Activated naive CD4-positive, alpha-beta T cell treated with anti-CD3 and anti-CD28 coated beads for 36 hours (primary cell): ENCODE measurements at regions of chr18 and their contacts with region 1.

Region 1: DNA sequence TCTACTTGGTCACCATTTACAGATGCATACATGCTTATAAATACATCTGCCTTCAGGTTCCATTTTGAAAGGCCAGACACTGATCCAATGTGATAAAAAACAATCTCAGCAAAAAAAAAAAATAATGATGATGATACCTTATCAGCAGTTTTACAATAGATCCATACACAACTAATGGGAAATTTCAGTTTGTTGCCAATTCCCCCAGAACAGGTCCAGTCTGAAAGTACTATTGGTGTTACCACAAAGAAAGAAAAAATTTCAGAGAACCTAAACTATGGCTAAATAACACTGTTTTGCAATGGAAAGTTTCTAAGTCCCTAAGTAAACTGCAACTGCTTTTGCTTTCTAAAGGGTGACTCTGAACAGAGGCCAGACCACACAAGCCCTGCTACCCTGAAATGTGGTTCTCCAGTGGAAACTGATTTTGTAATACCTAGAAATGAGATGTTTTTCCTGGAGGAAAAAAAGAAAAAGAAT is 54.1 kb downstream of the LPIN2 start:
- DNase-seq: peak; percentile 44
- H3K4me3 Mint-ChIP-seq: peak overlapping the region; percentile 53
- H3K27ac Mint-ChIP-seq: peak overlapping the region; percentile 100
- H3K4me1 Mint-ChIP-seq: peaks cover 88% of the 10 kb centered on the region
- H3K27me3 Mint-ChIP-seq: no peaks in the 10 kb centered on the region

Region 2: DNA sequence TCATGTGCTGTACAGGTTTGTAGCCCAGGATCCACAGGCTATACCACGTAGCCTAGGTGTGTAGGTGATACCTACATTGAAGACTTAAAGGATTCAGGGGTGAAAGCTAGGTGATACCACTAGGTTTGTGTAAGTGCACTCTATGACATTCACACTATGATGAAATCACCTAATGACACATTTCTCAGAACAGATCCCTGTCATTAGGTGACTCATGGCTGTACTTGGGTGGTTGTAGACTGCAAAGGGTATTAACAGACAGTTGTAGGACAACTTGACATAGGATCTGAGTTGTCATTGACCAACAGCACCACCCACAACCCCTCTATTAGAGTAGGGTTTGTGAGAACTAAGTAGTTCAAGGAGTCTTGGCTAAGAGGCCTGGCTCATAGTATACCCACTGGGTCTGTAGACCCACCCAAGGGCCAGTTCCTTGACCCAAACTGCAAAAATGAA is 331.0 kb before region 1 on chr18:
- CTCF ChIA-PET with region 1: no interaction called
- intact Hi-C with region 1: loop called (anchors 1 kb)
- DNase-seq: peak; percentile 66
- H3K4me3 Mint-ChIP-seq: no peak overlapping the region
- H3K27ac Mint-ChIP-seq: peak overlapping the region; percentile 50
- H3K4me1 Mint-ChIP-seq: peaks cover 30% of the 10 kb centered on the region
- H3K27me3 Mint-ChIP-seq: no peaks in the 10 kb centered on the region

Region 3: GRCh38 chr18:2932247-2933181 is 26.3 kb before region 1 on chr18:
- CTCF ChIA-PET with region 1: interaction called, 8 read pairs
- intact Hi-C with region 1: loop called (anchors 1 kb)
- DNase-seq: peak; percentile 68
- H3K4me3 Mint-ChIP-seq: no peak overlapping the region
- H3K27ac Mint-ChIP-seq: peak overlapping the region; percentile 94
- H3K4me1 Mint-ChIP-seq: peaks cover 35% of the 10 kb centered on the region
- H3K27me3 Mint-ChIP-seq: no peaks in the 10 kb centered on the region

Region 4: DNA sequence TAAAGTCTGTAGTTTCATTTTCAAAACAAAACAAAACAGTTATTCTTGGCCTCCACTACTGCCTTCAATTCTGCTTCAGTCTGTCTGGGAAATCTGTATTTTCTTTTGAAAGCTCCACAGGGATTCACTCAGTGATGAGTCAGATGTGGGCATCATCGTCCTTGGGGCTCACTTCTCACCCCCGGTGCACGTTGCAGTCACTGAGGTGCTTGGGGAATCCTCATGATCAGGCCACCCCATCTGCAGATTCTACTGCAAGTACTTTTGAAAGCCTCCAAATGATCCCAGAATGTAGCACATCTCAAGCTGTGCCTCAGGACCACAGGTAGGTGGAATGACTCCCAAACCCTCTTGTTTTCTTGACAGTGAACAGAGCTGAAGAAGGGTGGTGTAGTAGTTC is 19.8 kb after region 1 on chr18:
- CTCF ChIA-PET with region 1: interaction called, 25 read pairs
- intact Hi-C with region 1: loop called (anchors 1 kb)
- DNase-seq: peak; percentile 66
- H3K4me3 Mint-ChIP-seq: peak overlapping the region; percentile 54
- H3K27ac Mint-ChIP-seq: peak overlapping the region; percentile 92
- H3K4me1 Mint-ChIP-seq: peaks cover 91% of the 10 kb centered on the region
- H3K27me3 Mint-ChIP-seq: no peaks in the 10 kb centered on the region

Region 5: GRCh38 chr18:3012964-3013804 is 54.3 kb after region 1 on chr18 and contains the start of gene LPIN2:
- CTCF ChIA-PET with region 1: no interaction called
- intact Hi-C with region 1: loop called (anchors 1 kb)
- DNase-seq: peak; percentile 97
- H3K4me3 Mint-ChIP-seq: peak within 1 kb of the TSS; percentile 84
- H3K27ac Mint-ChIP-seq: peak within 1 kb of the TSS; percentile 92
- H3K4me1 Mint-ChIP-seq: peaks cover 68% of the 10 kb centered on the region
- H3K27me3 Mint-ChIP-seq: no peaks in the 10 kb centered on the region
- total RNA-seq, gene LPIN2: 62.4 to 65.7 TPM